CD4-positive, alpha-beta memory T cell (primary cell): ENCODE measurements at regions of chr7 and their contacts with region 1.

Region 1: DNA sequence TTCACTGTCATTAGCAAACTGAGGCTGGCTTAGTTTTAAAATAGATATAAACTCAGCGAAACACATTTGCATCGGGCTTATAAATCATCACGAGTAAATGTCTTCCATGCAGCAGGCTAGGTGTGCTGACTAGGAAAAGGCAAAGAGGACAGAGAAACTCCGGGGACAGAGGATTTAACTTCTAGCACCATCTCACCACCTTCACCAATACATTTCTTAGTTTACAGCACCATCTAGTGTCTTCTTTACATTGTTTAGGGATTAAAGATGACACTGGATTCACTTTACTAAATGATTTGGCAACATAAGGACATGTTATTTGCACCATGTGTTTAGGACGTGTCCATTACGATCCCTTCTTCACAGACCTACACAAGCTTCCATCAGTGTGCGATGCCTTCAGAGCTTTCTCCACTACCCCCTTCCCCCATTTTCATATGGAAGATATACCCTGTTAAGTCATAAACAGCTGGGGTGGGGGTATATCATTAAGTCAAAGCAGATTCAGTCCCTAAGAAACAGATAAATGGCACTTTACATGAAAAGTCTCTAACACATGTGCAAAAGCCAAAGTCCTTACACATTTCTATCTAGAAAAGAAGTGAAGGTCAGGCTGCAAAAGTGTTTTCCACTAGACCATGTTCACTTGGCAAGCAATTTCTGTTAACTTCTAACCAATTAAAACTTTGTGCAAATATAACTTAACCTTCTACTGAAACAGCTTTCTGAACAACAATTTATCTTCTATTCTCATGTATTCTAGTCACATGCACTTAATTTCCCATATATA is 103.3 kb downstream of the GRB10 start:
- DNase-seq: peak in 4 of 5 donors; percentile 51 to 64 (median 58)
- H3K4me3 ChIP-seq: no peak overlapping the region
- H3K4me3 Mint-ChIP-seq: no peak overlapping the region
- H3K27ac ChIP-seq: no peak overlapping the region
- H3K27ac Mint-ChIP-seq: no peak overlapping the region
- H3K4me1 ChIP-seq: no peaks in the 10 kb centered on the region
- H3K4me1 Mint-ChIP-seq: peaks cover 0 to 3% (median under 1%) of the 10 kb centered on the region in 4 donors
- H3K27me3 ChIP-seq: no peaks in the 10 kb centered on the region
- H3K27me3 Mint-ChIP-seq: peaks cover 0 to under 1% of the 10 kb centered on the region in 2 donors

Region 2: GRCh38 chr7:50092579-50093491 is 586.6 kb before region 1 on chr7 and contains the start of gene ZPBP:
- CTCF ChIA-PET with region 1: interaction called, 42 read pairs
- POLR2A ChIA-PET with region 1: no interaction called
- intact Hi-C with region 1: loop called (anchors 1 kb)
- DNase-seq: peak; percentile 62 to 72 (median 69)
- H3K4me3 ChIP-seq: peak within 1 kb of the TSS; percentile 44 to 66
- H3K4me3 Mint-ChIP-seq: peak within 1 kb of the TSS; percentile 88 to 95 (median 88)
- H3K27ac ChIP-seq: peak within 1 kb of the TSS; percentile 23
- H3K27ac Mint-ChIP-seq: peak within 1 kb of the TSS; percentile 45 to 88 (median 80)
- H3K4me1 ChIP-seq: peaks cover 4% of the 10 kb centered on the region
- H3K4me1 Mint-ChIP-seq: peaks cover 4 to 7% (median 7%) of the 10 kb centered on the region in 4 donors
- H3K27me3 ChIP-seq: no peaks in the 10 kb centered on the region
- H3K27me3 Mint-ChIP-seq: no peaks in the 10 kb centered on the region
- total RNA-seq, gene ZPBP: not detected

Region 3: DNA sequence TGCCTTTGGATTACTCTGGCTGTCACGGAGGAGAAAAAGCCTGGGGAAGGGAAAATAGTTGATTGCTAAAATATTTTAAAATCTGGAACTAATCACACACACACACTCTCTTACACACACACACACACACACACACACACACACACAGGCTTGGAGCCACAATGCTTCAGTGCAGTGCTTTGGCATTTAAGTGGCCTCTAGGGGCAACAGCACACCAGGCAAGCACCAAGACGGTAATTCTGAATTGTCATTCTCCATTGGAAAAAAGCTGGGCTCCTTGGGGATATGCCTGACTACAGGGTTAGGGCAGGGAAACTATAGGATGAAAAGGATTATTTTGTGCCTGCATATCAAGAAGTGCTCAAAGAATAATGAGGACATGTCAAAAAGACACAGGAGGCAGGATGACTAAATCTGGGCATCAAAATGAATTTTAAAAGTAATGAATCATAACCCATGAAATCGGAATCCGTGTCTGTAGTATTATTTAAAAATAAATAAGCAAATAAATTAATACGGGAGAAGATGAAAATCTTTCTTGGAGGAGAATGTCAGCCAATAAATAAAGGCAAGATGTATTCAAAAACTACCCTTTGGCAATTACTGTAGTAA is 83.8 kb before region 1 on chr7:
- CTCF ChIA-PET with region 1: interaction called, 18 read pairs
- POLR2A ChIA-PET with region 1: no interaction called
- intact Hi-C with region 1: no loop called
- DNase-seq: peak in 4 of 5 donors; percentile 15 to 38 (median 28)
- H3K4me3 ChIP-seq: no peak overlapping the region
- H3K4me3 Mint-ChIP-seq: peak overlapping the region in 1 of 8 donors; percentile 32
- H3K27ac ChIP-seq: no peak overlapping the region
- H3K27ac Mint-ChIP-seq: peak overlapping the region in 4 of 7 donors; percentile 54 to 85 (median 70)
- H3K4me1 ChIP-seq: peaks cover 18% of the 10 kb centered on the region
- H3K4me1 Mint-ChIP-seq: peaks cover 13 to 18% (median 17%) of the 10 kb centered on the region in 4 donors
- H3K27me3 ChIP-seq: no peaks in the 10 kb centered on the region
- H3K27me3 Mint-ChIP-seq: peaks cover 0 to under 1% of the 10 kb centered on the region in 2 donors

Region 4: GRCh38 chr7:50664461-50664922 is 14.9 kb before region 1 on chr7:
- CTCF ChIA-PET with region 1: interaction called, 25 read pairs
- POLR2A ChIA-PET with region 1: interaction called, 5 read pairs
- intact Hi-C with region 1: no loop called
- DNase-seq: no peak
- H3K4me3 ChIP-seq: no peak overlapping the region
- H3K4me3 Mint-ChIP-seq: peak overlapping the region in 4 of 8 donors; percentile 23 to 36 (median 25)
- H3K27ac ChIP-seq: no peak overlapping the region
- H3K27ac Mint-ChIP-seq: peak overlapping the region in 6 of 7 donors; percentile 7 to 72 (median 47)
- H3K4me1 ChIP-seq: peaks cover 60% of the 10 kb centered on the region
- H3K4me1 Mint-ChIP-seq: peaks cover 46 to 60% (median 54%) of the 10 kb centered on the region in 4 donors
- H3K27me3 ChIP-seq: no peaks in the 10 kb centered on the region
- H3K27me3 Mint-ChIP-seq: no peaks in the 10 kb centered on the region

Region 5: GRCh38 chr7:50711257-50712175 is 32.1 kb after region 1 on chr7:
- CTCF ChIA-PET with region 1: no interaction called
- POLR2A ChIA-PET with region 1: no interaction called
- intact Hi-C with region 1: no loop called
- DNase-seq: no peak
- H3K4me3 ChIP-seq: no peak overlapping the region
- H3K4me3 Mint-ChIP-seq: no peak overlapping the region
- H3K27ac ChIP-seq: no peak overlapping the region
- H3K27ac Mint-ChIP-seq: no peak overlapping the region
- H3K4me1 ChIP-seq: no peaks in the 10 kb centered on the region
- H3K4me1 Mint-ChIP-seq: peaks cover 0 to 9% (median 2%) of the 10 kb centered on the region in 4 donors
- H3K27me3 ChIP-seq: no peaks in the 10 kb centered on the region
- H3K27me3 Mint-ChIP-seq: peaks cover 0 to 1% of the 10 kb centered on the region in 2 donors